Lower leg skin (tissue), 4 donors: ENCODE measurements at regions of chr1 and their contacts with region 1.

Region 1: GRCh38 chr1:20151906-20152598 is 12.9 kb downstream of the PLA2G2F start:
- DNase-seq: peak; percentile 73 to 97
- H3K4me3 ChIP-seq: no peak overlapping the region
- CTCF ChIP-seq: peak in 2 of 3 donors; percentile 32 to 76
- POLR2A ChIP-seq: no peak

Region 2: GRCh38 chr1:19596714-19597495 is 555.1 kb before region 1 on chr1:
- intact Hi-C with region 1: no loop called
- DNase-seq: peak; percentile 97 to 99
- H3K4me3 ChIP-seq: peak overlapping the region; percentile 95
- CTCF ChIP-seq: no peak
- POLR2A ChIP-seq: no peak

Region 3: GRCh38 chr1:19918057-19918456 is 234.0 kb before region 1 on chr1:
- intact Hi-C with region 1: loop called (anchors 5 kb)
- DNase-seq: peak; percentile 76 to 96
- H3K4me3 ChIP-seq: no peak overlapping the region
- CTCF ChIP-seq: peak in 1 of 3 donors; percentile 72
- POLR2A ChIP-seq: no peak

Region 4: DNA sequence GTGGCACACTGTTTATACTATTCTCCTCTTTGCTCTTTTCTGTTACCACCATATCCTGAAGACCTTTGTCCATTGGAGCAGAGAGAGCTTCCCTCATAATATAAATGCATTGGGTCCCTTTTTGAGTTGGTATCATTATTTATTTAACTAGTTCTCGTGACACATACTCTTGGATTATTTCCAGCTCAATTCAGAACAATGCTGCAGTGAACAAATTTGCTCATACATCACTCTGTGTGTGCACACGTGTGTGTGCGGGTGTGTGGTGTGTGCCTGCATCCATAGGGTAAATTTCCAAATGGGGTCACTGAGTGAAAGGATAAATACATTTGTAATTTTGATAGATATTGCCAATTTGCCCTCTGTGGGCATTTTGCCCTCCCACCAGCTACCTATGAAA is 178.4 kb before region 1 on chr1:
- intact Hi-C with region 1: loop called (anchors 2 kb)
- DNase-seq: no peak
- H3K4me3 ChIP-seq: no peak overlapping the region
- CTCF ChIP-seq: no peak
- POLR2A ChIP-seq: no peak

Region 5: DNA sequence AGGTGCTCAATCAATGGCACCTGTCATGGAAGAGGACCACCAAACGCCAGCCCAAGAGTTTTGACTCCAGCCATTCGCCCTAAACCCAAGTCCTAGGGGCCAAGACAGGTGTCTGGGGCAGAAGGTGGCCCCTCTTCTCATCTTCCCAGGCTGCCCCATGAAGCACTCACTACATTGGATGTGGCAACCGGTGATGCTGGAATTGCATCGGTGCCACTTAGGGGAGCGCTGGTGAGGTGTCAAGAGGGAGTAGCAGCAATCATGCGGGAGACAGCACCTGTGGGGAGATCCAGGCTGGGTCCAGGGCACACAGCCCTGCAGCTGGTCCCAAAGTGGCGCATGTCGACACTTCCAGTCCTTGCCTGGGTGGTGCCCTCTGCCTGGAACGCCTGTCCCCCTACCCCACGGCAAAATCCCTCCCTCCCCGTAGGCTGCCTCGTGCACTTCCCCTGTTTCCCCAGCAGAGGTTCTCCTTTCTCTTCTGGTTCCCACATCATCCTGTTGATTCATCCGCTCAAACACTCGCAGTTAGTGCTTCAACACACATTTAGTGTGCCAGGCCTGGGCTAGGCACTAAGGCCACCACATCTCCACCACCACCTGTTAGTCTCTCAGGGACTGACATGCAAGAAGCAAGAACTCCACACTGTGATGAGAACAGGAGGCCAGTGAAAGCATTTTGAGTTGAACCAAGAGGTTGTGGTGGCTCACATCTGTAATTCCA is 51.3 kb before region 1 on chr1:
- intact Hi-C with region 1: loop called (anchors 5 kb)
- DNase-seq: peak in 1 of 2 donors; percentile 51
- H3K4me3 ChIP-seq: no peak overlapping the region
- CTCF ChIP-seq: peak in 1 of 3 donors; percentile 46
- POLR2A ChIP-seq: no peak